Activated CD4-positive, alpha-beta T cell treated with anti-CD3 and anti-CD28 coated beads for 36 hours (primary cell): ENCODE measurements at regions of chr1 and their contacts with region 1.

Region 1: GRCh38 chr1:160098852-160099561 is 588 bp upstream of the IGSF8 start:
- DNase-seq: peak; percentile 100
- ATAC-seq: peak; percentile 88
- H3K4me3 Mint-ChIP-seq: peak overlapping the region; percentile 65
- H3K27ac Mint-ChIP-seq: peak overlapping the region; percentile 65
- H3K4me1 Mint-ChIP-seq: peaks cover 44% of the 10 kb centered on the region
- H3K27me3 Mint-ChIP-seq: no peaks in the 10 kb centered on the region

Region 2: DNA sequence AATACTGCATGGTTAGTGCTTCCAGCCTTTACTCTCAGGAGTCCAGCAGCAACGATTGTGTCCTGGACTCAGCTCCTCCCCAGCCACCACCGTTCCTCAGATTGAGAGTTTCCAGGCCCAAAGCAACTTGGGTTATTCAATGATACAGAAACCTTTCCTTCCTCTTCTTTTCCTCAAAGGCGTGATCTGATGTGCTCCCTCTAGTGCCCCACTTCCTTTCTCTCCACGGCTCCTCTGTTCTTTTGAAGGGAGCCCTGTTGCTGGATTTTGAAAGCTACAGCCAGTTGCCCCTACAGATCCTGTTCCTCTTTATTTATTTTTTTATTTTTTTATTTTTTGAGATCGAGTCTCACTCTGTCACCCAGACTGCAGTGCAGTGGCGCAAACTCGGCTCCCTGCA is 398.7 kb before region 1 on chr1:
- CTCF ChIA-PET with region 1: no interaction called
- POLR2A ChIA-PET with region 1: no interaction called
- intact Hi-C with region 1: no loop called
- DNase-seq: no peak
- ATAC-seq: no peak
- H3K4me3 Mint-ChIP-seq: no peak overlapping the region
- H3K27ac Mint-ChIP-seq: no peak overlapping the region
- H3K4me1 Mint-ChIP-seq: no peaks in the 10 kb centered on the region
- H3K27me3 Mint-ChIP-seq: peaks cover 6% of the 10 kb centered on the region

Region 3: GRCh38 chr1:159780583-159781582 is 318.1 kb before region 1 on chr1 and contains the start of gene DUSP23:
- CTCF ChIA-PET with region 1: no interaction called
- POLR2A ChIA-PET with region 1: no interaction called
- intact Hi-C with region 1: loop called in 1 of 2 experiments (anchors 1 kb)
- DNase-seq: peak; percentile 97
- ATAC-seq: peak; percentile 99
- H3K4me3 Mint-ChIP-seq: peak within 1 kb of the TSS; percentile 70
- H3K27ac Mint-ChIP-seq: peak within 1 kb of the TSS; percentile 14
- H3K4me1 Mint-ChIP-seq: peaks cover 12% of the 10 kb centered on the region
- H3K27me3 Mint-ChIP-seq: peaks cover 2% of the 10 kb centered on the region
- total RNA-seq, gene DUSP23: 23.9 to 26.8 TPM

Region 4: GRCh38 chr1:159891275-159892157 is 207.5 kb before region 1 on chr1:
- CTCF ChIA-PET with region 1: no interaction called
- POLR2A ChIA-PET with region 1: no interaction called
- intact Hi-C with region 1: no loop called
- DNase-seq: peak; percentile 88
- ATAC-seq: peak; percentile 98
- H3K4me3 Mint-ChIP-seq: no peak overlapping the region
- H3K27ac Mint-ChIP-seq: no peak overlapping the region
- H3K4me1 Mint-ChIP-seq: peaks cover 4% of the 10 kb centered on the region
- H3K27me3 Mint-ChIP-seq: no peaks in the 10 kb centered on the region

Region 5: DNA sequence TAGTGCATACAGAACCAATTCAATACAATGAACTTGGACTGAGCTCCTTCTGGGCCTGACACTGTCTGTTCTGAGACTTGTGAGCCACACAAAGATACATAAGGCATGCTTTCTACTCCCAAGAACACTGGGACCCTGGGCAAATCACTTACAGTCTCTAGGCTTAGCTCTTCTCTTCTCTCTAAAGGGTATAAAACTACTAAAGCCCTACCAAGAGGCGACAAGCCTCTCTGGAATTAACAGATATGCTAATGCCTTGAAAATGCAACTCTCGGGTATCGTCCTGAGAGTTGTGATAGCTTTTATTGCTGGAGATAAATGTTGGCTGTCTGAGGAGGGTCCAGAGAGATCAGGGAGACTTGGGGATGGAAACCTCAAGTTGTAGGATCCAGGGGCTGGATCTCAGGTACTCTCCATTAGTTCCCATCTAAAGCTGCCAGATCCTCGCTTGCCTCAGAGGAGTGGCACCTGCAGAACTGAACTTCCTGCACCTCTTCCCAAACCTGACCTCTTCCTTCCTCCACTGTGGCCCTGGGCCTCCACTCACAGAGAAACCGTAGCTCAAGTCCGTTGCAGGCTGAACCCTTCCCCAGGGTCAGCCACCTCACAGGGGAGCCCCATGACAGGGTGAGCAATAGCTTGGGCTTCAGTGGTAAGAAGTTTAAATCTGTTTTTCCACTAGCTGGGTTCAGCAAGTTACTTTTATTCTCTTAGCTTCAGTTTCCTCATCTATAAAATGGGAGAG is 187.5 kb before region 1 on chr1:
- CTCF ChIA-PET with region 1: no interaction called
- POLR2A ChIA-PET with region 1: no interaction called
- intact Hi-C with region 1: no loop called
- DNase-seq: peak; percentile 49
- ATAC-seq: peak; percentile 31
- H3K4me3 Mint-ChIP-seq: no peak overlapping the region
- H3K27ac Mint-ChIP-seq: peak overlapping the region; percentile 92
- H3K4me1 Mint-ChIP-seq: peaks cover 46% of the 10 kb centered on the region
- H3K27me3 Mint-ChIP-seq: no peaks in the 10 kb centered on the region

Region 6: GRCh38 chr1:160031365-160032164 is 67.4 kb before region 1 on chr1 and contains the start of gene PIGM:
- CTCF ChIA-PET with region 1: interaction called, 3 read pairs
- POLR2A ChIA-PET with region 1: no interaction called
- intact Hi-C with region 1: loop called (anchors 1 to 5 kb)
- DNase-seq: peak; percentile 97
- ATAC-seq: peak; percentile 96
- H3K4me3 Mint-ChIP-seq: peak within 1 kb of the TSS; percentile 96
- H3K27ac Mint-ChIP-seq: peak within 1 kb of the TSS; percentile 92
- H3K4me1 Mint-ChIP-seq: peaks cover 34% of the 10 kb centered on the region
- H3K27me3 Mint-ChIP-seq: no peaks in the 10 kb centered on the region
- total RNA-seq, gene PIGM: 4.3 to 4.7 TPM

Region 7: GRCh38 chr1:160169553-160170399 is 70.8 kb after region 1 on chr1:
- CTCF ChIA-PET with region 1: interaction called, 5 read pairs
- POLR2A ChIA-PET with region 1: no interaction called
- intact Hi-C with region 1: loop called in 1 of 2 experiments (anchors 2 kb)
- DNase-seq: peak; percentile 67
- ATAC-seq: peak; percentile 64
- H3K4me3 Mint-ChIP-seq: no peak overlapping the region
- H3K27ac Mint-ChIP-seq: no peak overlapping the region
- H3K4me1 Mint-ChIP-seq: peaks cover 23% of the 10 kb centered on the region
- H3K27me3 Mint-ChIP-seq: peaks cover 8% of the 10 kb centered on the region

Region 8: GRCh38 chr1:160251687-160252526 is 152.9 kb after region 1 on chr1:
- CTCF ChIA-PET with region 1: interaction called, 7 read pairs
- POLR2A ChIA-PET with region 1: no interaction called
- intact Hi-C with region 1: loop called in 1 of 2 experiments (anchors 1 kb)
- DNase-seq: peak; percentile 74
- ATAC-seq: peak; percentile 93
- H3K4me3 Mint-ChIP-seq: no peak overlapping the region
- H3K27ac Mint-ChIP-seq: no peak overlapping the region
- H3K4me1 Mint-ChIP-seq: peaks cover 14% of the 10 kb centered on the region
- H3K27me3 Mint-ChIP-seq: no peaks in the 10 kb centered on the region

Region 9: DNA sequence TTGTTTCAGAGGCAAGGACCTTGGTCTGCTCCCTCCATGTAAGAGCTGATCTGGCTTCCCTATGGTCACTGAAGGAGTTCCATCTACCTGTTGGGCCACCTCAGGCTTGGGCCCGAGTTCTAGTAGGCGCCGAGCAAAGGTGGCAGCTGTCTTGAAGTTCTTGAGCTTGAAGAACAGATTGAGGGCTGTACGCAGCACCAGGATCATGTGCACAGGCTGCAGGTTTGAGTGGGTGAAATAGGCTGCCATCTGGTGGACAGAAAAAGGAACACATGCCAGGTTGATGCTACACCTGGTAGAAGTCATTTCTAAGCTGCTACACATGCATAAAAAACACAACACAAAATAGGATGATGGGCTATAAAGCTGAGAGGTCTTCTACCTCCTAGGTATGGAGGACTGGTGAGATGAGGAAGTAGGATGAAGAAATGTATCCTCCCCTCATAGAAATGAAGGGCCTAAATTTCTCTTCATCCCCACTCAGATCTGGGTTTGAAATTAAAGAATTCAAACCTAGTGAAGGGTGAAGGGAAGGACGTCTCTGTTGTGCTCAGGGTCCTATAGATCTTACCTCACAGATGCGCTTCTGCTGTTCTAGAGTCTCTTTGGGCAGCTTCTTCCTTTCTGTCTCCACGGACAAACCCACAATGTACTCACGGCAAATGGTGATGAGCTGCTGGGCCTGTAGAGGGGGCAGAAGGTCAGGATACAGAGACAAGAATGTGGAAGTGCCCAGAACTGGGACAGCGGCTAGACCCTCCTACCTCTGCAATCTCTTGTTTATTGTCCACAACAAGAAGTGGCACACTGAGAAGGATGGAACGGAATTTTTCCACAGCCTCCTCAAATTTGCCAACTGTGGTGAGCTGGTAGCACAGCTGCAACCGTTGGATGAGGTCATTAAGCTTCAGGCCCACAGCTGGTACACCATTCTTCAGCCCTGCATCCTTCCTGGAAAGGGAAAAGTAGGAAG is 192.5 kb after region 1 on chr1:
- CTCF ChIA-PET with region 1: interaction called, 49 read pairs
- POLR2A ChIA-PET with region 1: interaction called, 3 read pairs
- intact Hi-C with region 1: loop called (anchors 1 kb)
- DNase-seq: peak; percentile 76
- ATAC-seq: peak; percentile 98
- H3K4me3 Mint-ChIP-seq: no peak overlapping the region
- H3K27ac Mint-ChIP-seq: no peak overlapping the region
- H3K4me1 Mint-ChIP-seq: peaks cover 2% of the 10 kb centered on the region
- H3K27me3 Mint-ChIP-seq: no peaks in the 10 kb centered on the region